Panc1 (cell line): ENCODE measurements at regions of chrX and their contacts with region 1.

Region 1: DNA sequence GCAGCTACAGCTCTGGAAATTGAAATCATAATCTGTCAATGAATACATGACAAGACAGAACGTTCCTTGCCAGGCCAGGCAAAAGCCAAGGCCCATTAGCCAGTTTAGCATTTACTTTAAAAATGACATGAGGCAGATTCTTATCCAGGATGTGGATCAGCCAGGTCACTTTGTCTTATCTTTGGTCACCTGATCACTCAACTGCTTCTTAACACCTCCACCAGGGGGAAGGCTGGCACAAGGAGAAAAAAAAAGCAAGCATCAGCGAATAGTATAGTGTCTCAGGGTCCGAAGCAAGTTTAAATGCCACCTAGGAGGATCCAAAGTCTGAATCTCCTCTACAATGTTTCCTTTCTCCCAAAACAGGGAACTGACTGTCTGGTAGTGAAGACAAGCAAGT is 18.8 kb downstream of the ATP1B4 start:
- DNase-seq: no peak
- ATAC-seq: peak; percentile 68; the same call in 1 of the 2 replicates
- H3K4me3 ChIP-seq: no peak overlapping the region
- H3K27ac ChIP-seq: no peak overlapping the region
- H3K4me1 ChIP-seq: no peaks in the 10 kb centered on the region
- H3K27me3 ChIP-seq: peaks cover 6% of the 10 kb centered on the region; the same call in 1 of the 2 replicates
- CTCF ChIP-seq: peak; percentile 55

Region 2: GRCh38 chrX:120200851-120201250 is 179.8 kb before region 1 on chrX:
- CTCF ChIA-PET with region 1: no interaction called
- POLR2A ChIA-PET with region 1: no interaction called
- in situ Hi-C with region 1: no loop called
- intact Hi-C with region 1: no loop called
- DNase-seq: no peak
- ATAC-seq: no peak
- H3K4me3 ChIP-seq: no peak overlapping the region
- H3K27ac ChIP-seq: no peak overlapping the region
- H3K4me1 ChIP-seq: no peaks in the 10 kb centered on the region
- H3K27me3 ChIP-seq: peaks cover 14% of the 10 kb centered on the region
- CTCF ChIP-seq: no peak

Region 3: GRCh38 chrX:120365320-120365719 is 15.4 kb before region 1 on chrX:
- CTCF ChIA-PET with region 1: no interaction called
- POLR2A ChIA-PET with region 1: interaction called, 10 read pairs
- in situ Hi-C with region 1: no loop called
- intact Hi-C with region 1: no loop called
- DNase-seq: no peak
- ATAC-seq: no peak
- H3K4me3 ChIP-seq: no peak overlapping the region
- H3K27ac ChIP-seq: no peak overlapping the region
- H3K4me1 ChIP-seq: no peaks in the 10 kb centered on the region
- H3K27me3 ChIP-seq: 0 out of 2 replicates have a peak, but pooled peaks cover 3% of the 10 kb centered on the region
- CTCF ChIP-seq: peak; percentile 73

Region 4: GRCh38 chrX:120452131-120452530 is 71.4 kb after region 1 on chrX:
- CTCF ChIA-PET with region 1: no interaction called
- POLR2A ChIA-PET with region 1: no interaction called
- in situ Hi-C with region 1: no loop called
- intact Hi-C with region 1: loop called (anchors 5 kb)
- DNase-seq: no peak
- ATAC-seq: peak; percentile 70; the same call in 1 of the 2 replicates
- H3K4me3 ChIP-seq: no peak overlapping the region
- H3K27ac ChIP-seq: no peak overlapping the region
- H3K4me1 ChIP-seq: no peaks in the 10 kb centered on the region
- H3K27me3 ChIP-seq: no peaks in the 10 kb centered on the region
- CTCF ChIP-seq: peak; percentile 68